IMR-90 (cell line): ENCODE measurements at regions of chr22 and their contacts with region 1.

Region 1: GRCh38 chr22:25518000-25518663 is 46.3 kb upstream of the GRK3 start:
- DNase-seq: no peak
- ATAC-seq: no peak
- H3K4me3 ChIP-seq: no peak overlapping the region
- H3K27ac ChIP-seq: no peak overlapping the region
- H3K4me1 ChIP-seq: peaks cover 2% of the 10 kb centered on the region; the same call in 1 of the 2 replicates
- H3K27me3 ChIP-seq: no peaks in the 10 kb centered on the region
- CTCF ChIP-seq: no peak
- POLR2A ChIP-seq: no peak
- RAD21 ChIP-seq: no peak

Region 2: DNA sequence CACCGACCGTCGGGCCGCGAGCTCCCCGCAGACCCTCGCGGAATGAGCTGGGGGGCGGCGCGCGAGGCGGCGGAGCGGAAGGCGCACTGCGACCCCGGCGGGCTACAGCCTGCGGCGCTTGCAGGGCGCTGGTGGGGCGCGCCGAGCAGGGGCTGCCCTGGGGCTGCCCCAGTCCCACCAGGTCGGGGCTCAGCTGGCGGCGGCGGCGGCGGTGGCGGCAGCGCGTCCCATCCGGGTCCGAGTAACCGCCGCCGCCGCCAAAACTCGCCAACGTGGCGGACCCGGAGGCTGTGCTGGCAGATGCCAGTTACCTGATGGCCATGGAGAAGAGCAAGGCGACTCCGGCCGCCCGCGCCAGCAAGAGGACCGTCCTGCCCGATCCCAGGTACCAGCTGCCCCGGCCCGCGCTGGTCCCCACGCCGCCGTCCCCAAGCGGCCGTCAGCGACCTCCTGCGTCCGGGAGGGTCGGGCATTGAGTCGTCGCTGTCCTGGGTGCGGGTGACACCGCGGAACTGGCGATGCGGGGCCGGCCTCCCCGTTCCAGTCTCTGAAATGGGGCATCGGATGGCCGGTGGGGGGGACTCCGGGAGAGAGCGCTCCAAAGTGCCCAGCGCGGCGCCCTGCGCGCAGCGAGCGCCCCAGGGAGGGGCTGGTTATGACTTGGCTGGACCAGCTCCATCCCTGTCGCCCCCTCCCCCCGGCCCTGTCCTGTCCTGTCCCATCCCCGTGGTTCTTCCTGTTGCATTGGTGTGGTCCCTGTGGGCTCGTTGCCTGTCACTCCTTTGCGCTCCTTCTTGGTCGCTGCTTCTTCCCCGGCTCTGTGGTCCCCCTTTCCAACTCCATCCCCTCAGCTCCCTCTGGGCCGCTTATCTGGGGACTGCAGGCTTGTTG is 235.2 kb before region 1 on chr22:
- CTCF ChIA-PET with region 1: no interaction called
- POLR2A ChIA-PET with region 1: no interaction called
- dilution Hi-C with region 1: no loop called
- in situ Hi-C with region 1: no loop called
- intact Hi-C with region 1: loop called (anchors 5 kb)
- DNase-seq: no peak
- ATAC-seq: no peak; the same call in 1 of the 2 replicates
- H3K4me3 ChIP-seq: no peak overlapping the region
- H3K27ac ChIP-seq: no peak overlapping the region
- H3K4me1 ChIP-seq: no peaks in the 10 kb centered on the region
- H3K27me3 ChIP-seq: peaks cover 32% of the 10 kb centered on the region
- CTCF ChIP-seq: no peak
- POLR2A ChIP-seq: no peak
- RAD21 ChIP-seq: no peak